HepG2 (cell line): ENCODE measurements at regions of chr3 and their contacts with region 1.

Region 1: GRCh38 chr3:78988324-78988723 is 779.5 kb downstream of the ROBO1 start:
- DNase-seq: peak; percentile 59
- ATAC-seq: peak; percentile 83
- H3K4me3 ChIP-seq: no peak overlapping the region; a peak in 1 of 6 replicates
- H3K27ac ChIP-seq: peak overlapping the region; percentile 44
- H3K4me1 ChIP-seq: peaks cover 67% of the 10 kb centered on the region
- H3K27me3 ChIP-seq: no peaks in the 10 kb centered on the region
- CTCF ChIP-seq: peak; percentile 68
- EP300 ChIP-seq: peak in 1 of 2 experiments; percentile 74; a peak in 2 of 4 replicates
- POLR2A ChIP-seq: no peak
- RAD21 ChIP-seq: peak; percentile 39; the same call in 1 of the 2 replicates

Region 2: GRCh38 chr3:78659386-78659987 is 328.8 kb before region 1 on chr3:
- CTCF ChIA-PET with region 1: interaction called, 9 read pairs
- POLR2A ChIA-PET with region 1: no interaction called
- in situ Hi-C with region 1: loop called (anchors 10 kb)
- intact Hi-C with region 1: loop called (anchors 1 kb)
- DNase-seq: peak; percentile 29
- ATAC-seq: no peak; the same call in 2 of the 3 replicates
- H3K4me3 ChIP-seq: no peak overlapping the region
- H3K27ac ChIP-seq: no peak overlapping the region
- H3K4me1 ChIP-seq: no peaks in the 10 kb centered on the region
- H3K27me3 ChIP-seq: no peaks in the 10 kb centered on the region
- CTCF ChIP-seq: peak; percentile 58
- EP300 ChIP-seq: no peak
- POLR2A ChIP-seq: no peak
- RAD21 ChIP-seq: peak; percentile 36

Region 3: GRCh38 chr3:78666470-78666800 is 321.9 kb before region 1 on chr3:
- CTCF ChIA-PET with region 1: no interaction called
- POLR2A ChIA-PET with region 1: no interaction called
- in situ Hi-C with region 1: loop called (anchors 10 kb)
- intact Hi-C with region 1: no loop called
- DNase-seq: no peak
- ATAC-seq: no peak
- H3K4me3 ChIP-seq: no peak overlapping the region
- H3K27ac ChIP-seq: no peak overlapping the region
- H3K4me1 ChIP-seq: peaks cover 13% of the 10 kb centered on the region
- H3K27me3 ChIP-seq: no peaks in the 10 kb centered on the region
- CTCF ChIP-seq: no peak
- EP300 ChIP-seq: no peak
- POLR2A ChIP-seq: no peak
- RAD21 ChIP-seq: no peak